ENCODE measurements at regions of chr17 and their contacts with region 1.

Region 1: GRCh38 chr17:39653662-39654331 is 11.4 kb upstream of the TCAP start:
- DNase-seq: peak; percentile 91
- CTCF ChIP-seq: peak; percentile 77

Region 2: GRCh38 chr17:39636927-39637736 is 16.7 kb before region 1 on chr17 and contains the start of gene STARD3:
- CTCF ChIA-PET with region 1: interaction called, 60 read pairs
- POLR2A ChIA-PET with region 1: no interaction called
- DNase-seq: peak; percentile 97
- CTCF ChIP-seq: no peak

Region 3: GRCh38 chr17:39643271-39643670 is 10.5 kb before region 1 on chr17:
- CTCF ChIA-PET with region 1: interaction called, 59 read pairs
- POLR2A ChIA-PET with region 1: no interaction called
- DNase-seq: no peak
- CTCF ChIP-seq: no peak

Region 4: DNA sequence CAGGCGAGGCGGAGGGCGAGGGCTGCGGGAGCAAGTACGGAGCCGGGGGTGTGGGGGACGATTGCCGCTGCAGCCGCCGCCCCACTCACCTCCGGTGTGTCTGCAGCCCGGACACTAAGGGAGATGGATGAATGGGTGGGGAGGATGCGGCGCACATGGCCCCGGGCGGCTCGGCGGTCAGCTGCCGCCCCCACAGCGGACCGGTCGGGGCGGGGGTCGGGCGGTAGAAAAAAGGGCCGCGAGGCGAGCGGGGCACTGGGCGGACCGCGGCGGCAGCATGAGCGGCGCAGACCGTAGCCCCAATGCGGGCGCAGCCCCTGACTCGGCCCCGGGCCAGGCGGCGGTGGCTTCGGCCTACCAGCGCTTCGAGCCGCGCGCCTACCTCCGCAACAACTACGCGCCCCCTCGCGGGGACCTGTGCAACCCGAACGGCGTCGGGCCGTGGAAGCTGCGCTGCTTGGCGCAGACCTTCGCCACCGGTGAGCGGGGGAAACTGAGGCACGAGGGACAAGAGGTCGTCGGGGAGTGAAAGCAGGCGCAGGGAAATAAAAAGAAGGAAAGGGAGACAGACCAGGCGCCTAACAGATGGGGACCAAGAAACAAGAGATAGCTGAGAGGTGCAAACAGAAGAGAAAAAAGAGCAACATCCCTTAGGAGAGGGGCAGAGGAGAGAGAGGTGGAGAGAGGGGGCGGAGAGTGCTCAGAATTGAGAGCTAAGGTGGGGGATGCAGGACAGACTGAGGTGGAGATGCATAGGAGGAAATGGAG is 14.6 kb after region 1 on chr17 and contains the start of gene PNMT:
- CTCF ChIA-PET with region 1: interaction called, 180 read pairs
- POLR2A ChIA-PET with region 1: no interaction called
- DNase-seq: peak; percentile 80
- CTCF ChIP-seq: peak; percentile 89

Region 5: DNA sequence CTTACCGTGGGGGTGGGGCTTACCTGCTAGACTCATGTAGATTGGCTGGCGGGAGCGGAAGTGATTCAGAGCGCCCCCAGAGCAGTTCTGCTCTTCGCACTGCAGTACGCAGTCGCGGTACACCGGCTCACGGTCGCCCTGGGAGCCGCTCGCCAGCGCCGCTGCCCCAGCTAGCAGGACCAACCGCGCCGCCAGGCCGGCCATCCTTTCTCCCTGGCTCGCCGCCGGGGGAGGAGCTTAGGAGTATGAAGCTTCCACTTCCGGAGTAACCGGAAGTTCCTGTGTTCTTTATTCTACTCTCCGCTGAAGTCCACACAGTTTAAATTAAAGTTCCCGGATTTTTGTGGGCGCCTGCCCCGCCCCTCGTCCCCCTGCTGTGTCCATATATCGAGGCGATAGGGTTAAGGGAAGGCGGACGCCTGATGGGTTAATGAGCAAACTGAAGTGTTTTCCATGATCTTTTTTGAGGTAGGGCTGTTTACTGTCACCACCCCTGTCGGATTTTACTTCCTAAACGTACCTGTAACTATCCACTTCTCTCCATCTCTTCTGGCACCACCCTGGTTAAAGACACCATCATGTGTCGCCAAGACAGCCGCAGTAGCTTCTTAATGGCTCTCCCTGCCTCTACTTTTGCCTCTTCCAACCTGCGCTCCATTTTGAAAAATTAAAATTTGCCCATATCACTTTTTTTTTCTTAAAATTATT is 34.2 kb after region 1 on chr17 and contains the start of gene PGAP3:
- CTCF ChIA-PET with region 1: interaction called, 10 read pairs
- POLR2A ChIA-PET with region 1: no interaction called
- DNase-seq: peak; percentile 94
- CTCF ChIP-seq: no peak

Region 6: DNA sequence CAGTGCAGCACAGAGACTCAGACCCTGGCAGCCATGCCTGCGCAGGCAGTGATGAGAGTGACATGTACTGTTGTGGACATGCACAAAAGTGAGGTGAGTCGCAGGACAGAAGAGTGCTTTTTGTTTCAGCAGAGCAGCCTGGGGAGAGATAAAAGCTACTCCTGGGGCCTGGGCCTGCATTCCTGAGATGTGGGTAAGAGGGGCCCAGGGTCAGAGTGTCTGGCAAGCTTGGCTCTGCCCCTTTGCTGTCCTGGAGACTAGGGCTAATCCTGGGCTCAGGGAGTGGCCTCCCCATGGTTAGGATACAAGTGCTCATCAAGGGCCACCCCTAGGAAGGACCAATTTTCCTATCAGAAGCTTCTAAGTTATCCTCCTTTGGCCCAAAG is 41.3 kb after region 1 on chr17:
- CTCF ChIA-PET with region 1: interaction called, 12 read pairs
- POLR2A ChIA-PET with region 1: no interaction called
- DNase-seq: no peak
- CTCF ChIP-seq: no peak

Region 7: DNA sequence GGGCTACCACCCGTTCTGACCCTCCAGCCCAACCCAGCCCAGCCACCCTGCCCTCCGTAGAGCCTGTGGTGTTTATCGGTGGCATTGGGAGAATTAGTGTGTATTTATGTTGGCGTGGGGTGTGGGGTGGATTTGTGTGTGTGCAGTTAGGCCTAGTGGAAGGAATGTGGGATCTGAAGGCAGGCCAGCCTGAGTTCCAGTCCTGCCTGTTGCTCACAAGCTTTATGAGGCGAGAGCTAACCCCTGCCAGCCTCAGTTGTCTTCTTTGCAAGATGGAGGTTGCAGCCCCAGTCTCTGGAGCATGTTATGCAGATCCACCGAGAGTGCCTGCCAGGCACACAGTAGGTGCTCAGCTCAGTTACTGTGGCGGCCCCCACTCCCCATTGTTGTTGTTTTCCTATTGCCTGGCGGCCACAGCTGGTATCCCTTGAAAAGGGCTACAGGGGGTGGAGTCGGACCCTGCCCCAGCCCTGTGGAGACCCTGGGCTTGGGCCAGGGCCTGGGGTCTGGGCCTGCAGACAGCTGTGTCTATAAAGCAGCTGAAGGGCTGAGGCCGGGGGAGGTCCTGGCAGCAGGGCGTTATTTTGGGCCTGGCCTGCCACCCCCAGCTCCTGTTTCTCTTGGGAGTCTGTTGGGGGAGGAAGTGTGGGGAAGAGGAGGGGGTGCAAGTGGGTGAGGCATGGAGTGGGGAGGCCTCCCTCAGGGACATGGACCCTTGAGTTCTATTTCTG is 51.2 kb after region 1 on chr17:
- CTCF ChIA-PET with region 1: interaction called, 10 read pairs
- POLR2A ChIA-PET with region 1: no interaction called
- DNase-seq: no peak
- CTCF ChIP-seq: no peak

Region 8: DNA sequence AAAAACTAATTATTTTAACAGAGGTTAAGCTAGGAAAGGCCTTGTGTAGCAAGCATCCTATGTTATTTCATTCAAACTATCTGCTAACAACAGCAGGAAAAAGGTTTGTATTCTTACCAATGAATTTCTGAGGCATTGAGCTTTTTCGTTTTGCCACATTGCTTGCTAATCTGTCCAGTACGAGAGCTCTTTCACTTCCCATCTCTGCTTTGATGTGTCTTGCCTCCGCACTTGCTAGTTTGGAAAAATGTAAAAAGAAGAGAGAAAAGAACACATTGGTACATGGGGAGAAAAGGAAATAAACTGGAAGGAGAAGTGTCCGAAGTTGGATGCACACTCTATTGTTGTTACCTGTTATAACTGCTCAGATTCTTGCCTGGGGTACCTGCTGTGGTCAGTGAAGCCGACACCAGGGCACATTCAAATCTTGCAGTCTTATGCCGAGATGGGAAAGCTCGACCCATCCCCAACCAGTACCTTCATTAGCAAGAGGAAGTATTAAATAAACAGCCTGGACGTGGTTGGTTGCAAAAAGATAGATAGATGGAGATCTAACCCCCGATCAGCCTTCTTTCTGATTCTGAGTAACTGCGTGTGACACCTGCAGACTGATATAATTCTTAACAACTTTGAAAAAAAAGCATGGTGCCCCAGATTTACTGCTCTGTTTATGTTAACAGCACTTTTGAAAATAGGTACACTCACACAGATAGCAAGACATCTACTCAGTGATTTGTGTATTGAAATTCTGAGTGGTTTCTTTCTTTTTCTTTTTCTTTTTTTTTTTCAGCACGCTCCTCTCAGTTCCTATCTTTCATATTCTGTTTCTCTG is 124.0 kb after region 1 on chr17:
- CTCF ChIA-PET with region 1: no interaction called
- POLR2A ChIA-PET with region 1: no interaction called
- DNase-seq: peak; percentile 62
- CTCF ChIP-seq: no peak